Cardiac septum (tissue), 1 donor: ENCODE measurements at regions of chr12 and their contacts with region 1.

Region 1: GRCh38 chr12:4251216-4251891 is 22.2 kb upstream of the CCND2 start:
- DNase-seq: no peak

Region 2: DNA sequence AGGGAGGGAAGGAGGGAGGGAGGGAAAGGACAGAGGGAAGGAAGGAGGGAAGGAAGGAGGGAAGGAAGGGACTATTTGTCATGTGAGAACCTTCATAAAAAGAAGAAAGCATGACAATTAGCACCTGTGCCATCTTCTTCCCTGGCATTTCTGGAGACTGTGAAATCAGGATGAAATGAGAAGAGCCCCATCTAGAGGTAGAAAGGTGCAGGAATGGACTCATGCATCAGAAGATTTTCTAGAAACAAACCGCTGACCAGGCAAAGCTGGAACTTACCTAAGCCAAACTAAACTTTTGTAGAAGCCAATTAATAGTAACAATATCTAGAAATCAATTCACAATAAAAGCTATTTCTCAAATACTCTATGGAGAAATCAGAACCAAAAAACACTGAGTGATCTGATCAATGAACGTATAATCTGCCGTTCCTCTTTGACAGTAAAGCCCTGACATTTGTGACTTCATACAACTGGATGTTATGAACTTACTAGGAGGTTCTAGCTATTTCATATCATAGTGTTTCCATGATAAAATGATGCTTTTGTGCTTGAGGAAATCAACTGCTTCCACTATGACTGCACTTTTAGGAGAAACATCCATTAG is 474.0 kb before region 1 on chr12:
- intact Hi-C with region 1: no loop called
- DNase-seq: no peak

Region 3: GRCh38 chr12:4118017-4118510 is 133.3 kb before region 1 on chr12:
- intact Hi-C with region 1: loop called (anchors 5 kb)
- DNase-seq: no peak

Region 4: DNA sequence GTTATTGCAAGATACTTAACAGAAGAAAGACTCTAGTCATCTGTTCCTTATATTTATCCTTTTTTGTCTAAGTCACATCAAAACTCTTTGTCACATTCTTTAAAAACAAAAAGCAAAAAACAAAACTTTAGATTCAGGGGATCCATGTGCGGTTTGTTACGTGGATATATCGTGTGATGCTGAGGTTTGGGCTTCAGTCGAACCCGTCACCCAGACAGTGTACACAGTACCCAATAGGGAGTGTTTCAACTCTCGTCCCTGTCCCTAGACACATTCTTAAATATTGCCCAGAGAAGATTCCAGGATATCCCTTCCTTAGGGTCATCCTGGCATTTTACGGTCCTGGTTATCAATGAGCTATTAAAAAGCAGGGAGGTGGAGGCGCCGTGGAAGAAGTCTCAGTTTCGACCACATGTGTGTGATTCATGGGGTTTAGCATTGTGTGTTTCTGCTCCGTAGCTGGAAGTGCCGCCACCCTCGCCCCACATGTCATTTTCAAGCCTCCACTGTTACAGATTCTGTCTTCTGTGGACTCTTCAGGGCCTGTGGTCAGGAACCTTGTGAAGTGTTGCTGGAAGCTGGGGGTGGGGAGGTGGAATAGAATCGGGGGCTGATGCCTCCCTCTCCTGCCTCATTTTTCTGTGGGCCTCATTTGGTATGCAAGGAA is 42.1 kb after region 1 on chr12:
- intact Hi-C with region 1: no loop called
- DNase-seq: no peak

Region 5: DNA sequence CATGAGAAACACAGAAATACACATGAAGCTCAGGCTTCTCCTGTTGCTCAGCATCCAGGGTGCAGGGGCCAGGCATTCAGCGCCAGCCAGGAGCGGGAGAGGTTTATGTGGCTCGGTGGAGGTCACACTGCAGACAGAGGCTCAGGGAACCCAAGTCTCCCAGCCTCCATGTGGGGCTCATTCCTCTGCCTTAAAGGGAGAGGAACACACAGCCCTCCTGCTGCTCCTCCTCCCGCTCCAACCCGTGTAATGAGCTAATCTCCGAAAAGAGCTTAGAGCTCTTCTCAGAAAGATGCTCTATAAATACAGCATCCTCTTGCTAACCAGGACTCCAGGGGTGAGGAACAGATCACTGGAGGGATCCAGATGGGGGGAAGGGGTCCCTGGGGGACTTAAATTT is 166.1 kb after region 1 on chr12:
- intact Hi-C with region 1: no loop called
- DNase-seq: no peak

Region 6: GRCh38 chr12:4538207-4539160 is 287.1 kb after region 1 on chr12 and contains the start of gene RAD51AP1:
- intact Hi-C with region 1: no loop called
- DNase-seq: peak; percentile 98
- total RNA-seq, gene RAD51AP1: 1.6 TPM